ENCODE measurements at regions of chr2 and their contacts with region 1.

Region 1: GRCh38 chr2:186903216-186903615 is 54.2 kb upstream of the ZSWIM2 start:
- DNase-seq: no peak
- H3K4me3 ChIP-seq: no peak overlapping the region
- H3K27ac ChIP-seq: no peak overlapping the region
- H3K4me1 ChIP-seq: no peaks in the 10 kb centered on the region
- H3K27me3 ChIP-seq: no peaks in the 10 kb centered on the region
- CTCF ChIP-seq: peak in 2 of 3 experiments; percentile 5 to 7; a peak in 2 of 4 replicates
- EP300 ChIP-seq: no peak
- POLR2A ChIP-seq: no peak
- RAD21 ChIP-seq: peak in 1 of 2 experiments; percentile 51; a peak in 2 of 4 replicates

Region 2: DNA sequence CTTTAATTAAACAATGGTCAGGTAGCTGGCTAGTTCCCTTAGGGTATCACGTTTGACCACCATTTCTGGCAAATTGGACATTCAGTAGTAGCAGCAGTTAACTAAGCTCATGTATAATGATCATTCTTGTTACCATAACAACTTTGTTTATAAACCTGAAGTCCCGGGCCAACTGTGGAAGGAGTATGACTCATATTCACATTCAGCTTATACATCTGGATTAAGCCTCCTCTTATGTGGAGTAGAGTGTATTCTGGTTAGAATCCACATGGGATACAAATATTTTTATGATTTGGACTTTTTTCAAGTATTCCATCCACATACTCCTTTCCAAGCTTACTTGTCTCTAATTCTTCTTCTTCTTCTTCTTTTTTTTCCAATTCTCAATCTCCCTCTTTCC is 16.1 kb after region 1 on chr2:
- CTCF ChIA-PET with region 1: interaction called, 10 read pairs
- POLR2A ChIA-PET with region 1: no interaction called
- DNase-seq: no peak
- H3K4me3 ChIP-seq: no peak overlapping the region
- H3K27ac ChIP-seq: no peak overlapping the region
- H3K4me1 ChIP-seq: no peaks in the 10 kb centered on the region
- H3K27me3 ChIP-seq: no peaks in the 10 kb centered on the region
- CTCF ChIP-seq: no peak
- EP300 ChIP-seq: no peak
- POLR2A ChIP-seq: no peak
- RAD21 ChIP-seq: no peak

Region 3: GRCh38 chr2:187447336-187447735 is 544.1 kb after region 1 on chr2:
- CTCF ChIA-PET with region 1: interaction called, 13 read pairs
- POLR2A ChIA-PET with region 1: no interaction called
- DNase-seq: no peak
- H3K4me3 ChIP-seq: peak overlapping the region in 2 of 4 experiments; percentile 8 to 32; a peak in 3 of 8 replicates
- H3K27ac ChIP-seq: no peak overlapping the region
- H3K4me1 ChIP-seq: peaks cover 0 to 5% (median 1%) of the 10 kb centered on the region in 4 experiments; a peak in 2 of 7 replicates
- H3K27me3 ChIP-seq: no peaks in the 10 kb centered on the region
- CTCF ChIP-seq: no peak
- EP300 ChIP-seq: no peak
- POLR2A ChIP-seq: no peak
- RAD21 ChIP-seq: no peak